Adrenal gland (tissue), 19 donors: ENCODE measurements at regions of chr15 and their contacts with region 1.

Region 1: DNA sequence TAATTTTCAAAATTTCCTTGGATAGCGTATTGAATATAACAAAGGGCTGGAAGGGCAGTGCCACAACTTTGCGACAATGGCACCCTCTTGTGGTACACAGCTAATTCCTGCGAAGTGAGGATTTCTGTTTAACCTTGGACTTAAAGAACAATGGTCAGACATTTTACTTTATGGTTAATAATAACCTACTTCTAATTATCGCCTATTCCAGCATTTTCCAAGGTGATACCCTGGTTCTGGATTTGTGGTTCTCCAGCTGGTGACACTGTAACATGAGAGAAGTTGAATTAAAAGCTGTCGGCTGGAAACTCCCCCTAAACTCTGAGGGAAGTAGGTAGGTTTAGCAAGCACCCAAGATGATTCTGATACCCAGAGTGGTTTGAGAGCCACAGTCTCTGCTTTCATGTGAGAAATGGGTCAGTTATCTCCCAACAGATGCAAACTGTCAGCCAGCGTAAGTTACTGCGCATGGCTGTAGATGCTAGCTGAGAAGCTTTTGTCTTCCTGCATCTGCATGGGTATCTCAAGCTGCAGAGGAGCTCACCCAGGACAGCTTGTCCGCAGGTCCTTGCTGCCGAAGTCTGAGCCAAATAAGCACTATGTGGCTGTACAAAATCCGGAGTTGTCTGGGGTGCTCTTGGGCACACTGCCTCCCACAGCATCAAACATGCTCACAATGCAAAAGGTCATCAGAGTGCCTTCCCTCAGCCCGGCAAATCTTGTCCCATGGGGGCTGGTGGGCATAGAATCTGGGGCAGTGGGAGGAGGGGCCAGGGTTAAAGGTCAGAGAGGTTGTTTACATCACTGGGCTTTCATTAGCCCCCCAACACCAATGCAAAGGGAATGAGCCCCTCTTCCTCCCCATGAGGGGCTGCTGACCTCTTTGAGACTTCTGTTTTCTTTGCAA is 6.6 kb upstream of the CHSY1 start:
- DNase-seq: peak; percentile 57 to 88 (median 74)
- H3K4me3 ChIP-seq: no peak overlapping the region
- H3K27ac ChIP-seq: no peak overlapping the region
- H3K4me1 ChIP-seq: peaks cover 0 to 10% of the 10 kb centered on the region in 2 donors
- H3K27me3 ChIP-seq: no peaks in the 10 kb centered on the region
- CTCF ChIP-seq: peak; percentile 63 to 96 (median 91)
- POLR2A ChIP-seq: no peak

Region 2: GRCh38 chr15:101088788-101089583 is 169.5 kb before region 1 on chr15:
- intact Hi-C with region 1: loop called (anchors 2 to 5 kb)
- DNase-seq: peak; percentile 58 to 83 (median 78)
- H3K4me3 ChIP-seq: peak overlapping the region in 1 of 4 donors; percentile 23
- H3K27ac ChIP-seq: peak overlapping the region in 2 of 5 donors; percentile 83 to 90
- H3K4me1 ChIP-seq: peaks cover 8 to 35% of the 10 kb centered on the region in 2 donors
- H3K27me3 ChIP-seq: no peaks in the 10 kb centered on the region
- CTCF ChIP-seq: peak; percentile 88 to 99 (median 98)
- POLR2A ChIP-seq: no peak

Region 3: GRCh38 chr15:101206176-101206591 is 52.3 kb before region 1 on chr15:
- intact Hi-C with region 1: no loop called
- DNase-seq: peak; percentile 62 to 83 (median 76)
- H3K4me3 ChIP-seq: peak overlapping the region in 1 of 4 donors; percentile 42
- H3K27ac ChIP-seq: peak overlapping the region; percentile 69 to 89 (median 73)
- H3K4me1 ChIP-seq: peaks cover 44 to 91% of the 10 kb centered on the region in 2 donors
- H3K27me3 ChIP-seq: no peaks in the 10 kb centered on the region
- CTCF ChIP-seq: no peak
- POLR2A ChIP-seq: peak in 1 of 2 donors; percentile 51

Region 4: GRCh38 chr15:101372149-101372577 is 113.7 kb after region 1 on chr15:
- intact Hi-C with region 1: no loop called
- DNase-seq: no peak
- H3K4me3 ChIP-seq: no peak overlapping the region
- H3K27ac ChIP-seq: no peak overlapping the region
- H3K4me1 ChIP-seq: peaks cover 0 to 6% of the 10 kb centered on the region in 2 donors
- H3K27me3 ChIP-seq: no peaks in the 10 kb centered on the region
- CTCF ChIP-seq: no peak
- POLR2A ChIP-seq: no peak